Gastrocnemius medialis (tissue), 4 donors: ENCODE measurements at regions of chr9 and their contacts with region 1.

Region 1: DNA sequence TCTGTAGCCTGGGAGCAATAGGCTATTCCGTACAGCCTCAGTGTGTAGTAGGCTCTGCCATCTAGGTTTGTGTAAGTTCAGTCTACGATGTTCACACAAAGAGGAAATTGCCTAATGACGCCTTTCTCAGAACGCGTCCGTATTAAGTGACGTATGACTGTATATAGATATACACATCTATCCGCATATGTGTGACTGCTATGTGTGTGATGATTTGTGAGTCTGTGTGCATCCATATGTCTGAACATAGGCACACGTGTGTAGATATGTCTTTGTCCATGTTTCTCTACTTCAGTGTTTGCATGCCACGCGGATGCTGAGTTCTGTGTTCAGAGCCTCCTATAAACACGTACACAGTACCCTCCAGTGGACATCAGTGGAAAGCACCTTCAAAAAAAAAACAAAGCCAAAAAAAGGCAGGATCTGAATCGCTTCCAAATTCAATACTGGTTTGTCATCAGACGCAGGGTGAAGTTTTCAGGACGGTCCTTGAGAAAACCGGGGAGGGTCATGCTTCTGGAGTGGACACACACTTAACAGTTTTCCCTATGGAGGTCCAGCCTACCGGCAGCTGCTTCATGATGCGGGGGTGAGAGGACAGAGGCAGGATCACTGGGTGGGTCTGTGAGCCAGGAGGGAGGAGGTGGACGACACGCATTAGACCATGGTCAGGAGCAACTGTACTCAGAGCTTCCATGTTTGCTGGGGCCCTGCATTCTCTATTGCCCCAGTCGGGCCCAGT is 29.5 kb upstream of the ALDH1B1 start:
- DNase-seq: no peak
- ATAC-seq: peak; percentile 64 to 84
- H3K4me3 ChIP-seq: peak overlapping the region in 1 of 4 donors; percentile 6
- H3K27ac ChIP-seq: no peak overlapping the region
- H3K4me1 ChIP-seq: peaks cover 2 to 4% of the 10 kb centered on the region in 2 donors
- H3K27me3 ChIP-seq: no peaks in the 10 kb centered on the region
- CTCF ChIP-seq: peak in 3 of 5 experiments; percentile 24 to 54 (median 48)
- POLR2A ChIP-seq: no peak

Region 2: GRCh38 chr9:38088006-38088925 is 274.8 kb before region 1 on chr9:
- in situ Hi-C with region 1: no loop called
- intact Hi-C with region 1: loop called (anchors 5 kb)
- DNase-seq: peak; percentile 23 to 64
- ATAC-seq: peak; percentile 85 to 89
- H3K4me3 ChIP-seq: no peak overlapping the region
- H3K27ac ChIP-seq: peak overlapping the region in 2 of 4 donors; percentile 36 to 42
- H3K4me1 ChIP-seq: peaks cover 8 to 9% of the 10 kb centered on the region in 2 donors
- H3K27me3 ChIP-seq: no peaks in the 10 kb centered on the region
- CTCF ChIP-seq: peak; percentile 87 to 95 (median 90)
- POLR2A ChIP-seq: no peak

Region 3: DNA sequence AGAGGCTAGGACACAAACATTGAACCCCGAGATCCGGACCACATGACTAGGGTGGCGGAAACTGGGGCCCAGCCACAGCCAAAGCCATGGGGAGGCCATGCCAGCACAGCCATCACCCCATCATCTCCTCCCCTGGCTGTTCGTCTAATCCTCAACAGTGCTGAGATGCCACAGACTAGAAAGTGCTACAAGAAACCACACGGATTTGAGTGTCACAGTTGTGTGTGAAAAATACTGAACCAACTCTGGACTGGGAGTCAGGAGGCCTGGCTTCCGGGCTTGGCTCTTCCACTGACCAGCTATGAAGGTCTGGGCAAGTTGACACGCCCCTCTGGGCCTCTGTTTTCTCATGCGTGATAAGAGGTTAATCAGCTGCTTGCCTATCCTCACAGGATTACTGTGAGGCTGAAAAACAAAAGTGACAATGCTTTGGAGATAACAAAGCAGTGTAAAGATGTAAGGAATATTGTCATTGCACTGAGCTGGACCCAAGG is 255.2 kb before region 1 on chr9:
- in situ Hi-C with region 1: loop called in 1 of 4 experiments (anchors 25 kb)
- intact Hi-C with region 1: no loop called
- DNase-seq: no peak
- ATAC-seq: no peak
- H3K4me3 ChIP-seq: no peak overlapping the region
- H3K27ac ChIP-seq: no peak overlapping the region
- H3K4me1 ChIP-seq: no peaks in the 10 kb centered on the region
- H3K27me3 ChIP-seq: no peaks in the 10 kb centered on the region
- CTCF ChIP-seq: no peak
- POLR2A ChIP-seq: no peak

Region 4: DNA sequence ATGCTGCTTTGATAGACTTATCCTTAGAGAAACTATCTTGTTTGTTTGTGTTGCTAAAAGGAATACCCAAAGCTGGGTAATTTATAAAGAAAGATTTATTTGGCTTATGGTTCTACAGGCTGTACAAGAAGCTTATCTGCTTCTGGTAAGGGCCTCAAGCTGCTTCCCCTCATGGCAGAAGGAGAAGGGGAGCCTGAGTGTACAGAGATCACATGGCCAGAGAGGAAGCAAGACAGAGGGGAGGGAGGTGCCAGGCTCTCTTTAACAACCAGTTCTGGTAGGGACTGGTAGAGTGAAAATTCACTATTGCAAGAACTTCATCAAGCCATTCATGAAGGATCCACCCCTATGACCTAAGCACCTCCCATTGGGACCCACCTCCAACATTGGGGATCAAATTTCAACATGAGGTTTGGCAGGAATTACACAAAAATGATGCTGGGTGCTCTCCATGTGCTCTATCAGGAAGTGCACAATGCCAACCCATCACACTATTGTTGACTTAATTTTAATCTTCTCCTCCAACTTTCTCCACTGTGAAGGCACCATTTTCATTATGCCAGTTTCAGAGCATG is 178.9 kb before region 1 on chr9:
- in situ Hi-C with region 1: no loop called
- intact Hi-C with region 1: no loop called
- DNase-seq: no peak
- ATAC-seq: no peak
- H3K4me3 ChIP-seq: no peak overlapping the region
- H3K27ac ChIP-seq: no peak overlapping the region
- H3K4me1 ChIP-seq: no peaks in the 10 kb centered on the region
- H3K27me3 ChIP-seq: no peaks in the 10 kb centered on the region
- CTCF ChIP-seq: no peak
- POLR2A ChIP-seq: no peak

Region 5: GRCh38 chr9:38408719-38409118 is 45.7 kb after region 1 on chr9:
- in situ Hi-C with region 1: loop called in 2 of 4 experiments (anchors 5 to 10 kb)
- intact Hi-C with region 1: no loop called
- DNase-seq: no peak
- ATAC-seq: no peak
- H3K4me3 ChIP-seq: no peak overlapping the region
- H3K27ac ChIP-seq: no peak overlapping the region
- H3K4me1 ChIP-seq: no peaks in the 10 kb centered on the region
- H3K27me3 ChIP-seq: peaks cover 8 to 16% (median 10%) of the 10 kb centered on the region in 3 donors
- CTCF ChIP-seq: no peak
- POLR2A ChIP-seq: no peak

Region 6: DNA sequence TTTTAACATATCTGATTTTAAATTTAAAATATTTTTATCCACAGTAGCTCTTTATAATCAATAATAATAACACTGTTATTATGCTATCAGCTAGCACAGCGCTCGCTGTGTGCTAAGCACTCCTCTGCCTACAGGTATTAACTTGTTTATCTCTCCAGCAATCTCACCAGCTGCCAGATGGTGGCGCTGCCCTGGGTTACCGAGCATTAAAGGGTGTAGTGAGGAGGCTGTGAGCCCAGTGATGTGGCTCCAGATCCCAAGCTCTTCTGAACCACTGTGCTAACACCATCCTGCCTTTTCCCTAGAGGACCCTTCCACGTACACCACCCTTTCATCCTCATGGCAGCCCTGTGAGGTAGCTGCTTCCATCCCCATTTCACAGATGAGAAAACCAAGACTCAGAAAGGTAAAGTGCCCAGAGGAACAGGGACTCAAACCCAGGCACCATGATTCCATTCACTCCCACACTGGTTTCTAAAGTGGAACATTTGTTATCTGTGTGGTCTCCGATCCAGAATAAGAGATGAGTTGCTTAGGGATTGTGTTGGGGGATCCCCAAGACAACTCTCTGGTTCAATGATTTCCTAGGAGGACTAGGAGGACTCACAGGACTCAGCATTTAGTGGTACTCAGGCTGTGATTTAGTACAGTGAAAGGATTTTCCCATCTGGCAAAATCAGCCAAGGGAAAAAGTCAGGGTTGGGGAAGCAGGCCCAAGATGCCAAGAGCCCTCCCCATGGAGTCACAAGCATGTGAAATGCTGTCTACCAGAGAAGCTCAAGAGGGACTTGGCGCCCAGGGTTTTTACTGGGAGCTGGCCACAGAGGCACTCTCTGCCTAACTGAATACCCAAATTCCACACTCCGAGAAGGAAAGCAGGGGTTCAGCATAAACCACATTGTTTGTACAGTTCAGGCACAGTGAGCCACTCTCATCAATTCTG is 54.3 kb after region 1 on chr9:
- in situ Hi-C with region 1: loop called in 1 of 4 experiments (anchors 10 kb)
- intact Hi-C with region 1: no loop called
- DNase-seq: no peak
- ATAC-seq: no peak
- H3K4me3 ChIP-seq: no peak overlapping the region
- H3K27ac ChIP-seq: no peak overlapping the region
- H3K4me1 ChIP-seq: no peaks in the 10 kb centered on the region
- H3K27me3 ChIP-seq: peaks cover 11 to 18% (median 13%) of the 10 kb centered on the region in 3 donors
- CTCF ChIP-seq: peak in 1 of 5 experiments; percentile 33
- POLR2A ChIP-seq: no peak